ENCODE measurements at regions of chr5 and their contacts with region 1.

Region 1: GRCh38 chr5:137220523-137220927 is 278.6 kb downstream of the SPOCK1 start:
- DNase-seq: peak; percentile 35 to 75 (median 66)
- H3K4me3 ChIP-seq: no peak overlapping the region
- H3K27ac ChIP-seq: peak overlapping the region in 1 of 5 donors; percentile 1
- H3K4me1 ChIP-seq: peaks cover 0 to 7% of the 10 kb centered on the region in 2 donors
- H3K27me3 ChIP-seq: no peaks in the 10 kb centered on the region
- CTCF ChIP-seq: peak; percentile 24 to 79 (median 74)
- POLR2A ChIP-seq: no peak

Region 2: GRCh38 chr5:136811551-136811950 is 409.0 kb before region 1 on chr5:
- intact Hi-C with region 1: loop called in 1 of 2 experiments (anchors 10 kb)
- DNase-seq: peak in 6 of 7 donors; percentile 30 to 65 (median 46)
- H3K4me3 ChIP-seq: no peak overlapping the region
- H3K27ac ChIP-seq: peak overlapping the region in 2 of 5 donors; percentile 75 to 80
- H3K4me1 ChIP-seq: peaks cover 24 to 31% of the 10 kb centered on the region in 2 donors
- H3K27me3 ChIP-seq: no peaks in the 10 kb centered on the region
- CTCF ChIP-seq: no peak
- POLR2A ChIP-seq: no peak

Region 3: DNA sequence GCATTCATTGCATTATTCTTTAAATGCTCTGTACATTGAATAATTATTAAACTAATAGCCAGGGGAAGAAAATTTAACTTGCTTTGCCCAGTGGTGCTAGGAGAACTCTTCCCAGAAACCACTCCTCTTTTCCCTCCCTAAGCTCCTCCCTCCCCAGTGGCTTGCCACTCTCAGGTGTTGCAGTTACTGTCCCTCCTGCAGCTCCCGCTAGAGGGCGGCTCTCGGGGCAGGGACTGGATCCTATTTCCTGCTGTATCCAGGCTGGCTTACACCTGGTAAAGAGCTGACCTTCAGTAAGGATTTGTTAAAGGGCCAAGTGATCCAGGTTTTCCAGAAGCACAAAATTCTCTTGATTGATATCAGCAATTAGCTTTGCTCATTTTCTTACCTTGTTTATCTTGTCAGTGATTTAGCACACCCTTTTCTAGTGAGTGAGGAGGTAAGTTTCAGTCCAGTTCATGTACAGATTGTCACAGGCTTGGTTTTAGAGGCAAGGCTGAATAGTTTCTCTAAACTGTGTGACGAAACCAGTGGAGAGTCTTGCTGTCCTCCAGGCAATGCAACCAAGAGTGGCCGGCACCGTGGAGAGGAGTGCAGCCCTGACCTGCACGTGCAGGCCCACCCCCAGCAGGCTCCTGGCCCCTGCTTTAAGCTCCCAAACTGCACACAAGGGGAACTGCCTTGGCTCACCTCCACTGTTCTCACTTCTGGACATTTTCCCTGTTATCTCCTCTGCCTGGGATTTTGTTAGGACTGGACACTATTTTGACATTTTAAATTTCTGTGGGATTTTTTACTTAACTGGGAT is 145.2 kb before region 1 on chr5:
- intact Hi-C with region 1: loop called in 1 of 2 experiments (anchors 10 kb)
- DNase-seq: peak; percentile 79 to 94 (median 91)
- H3K4me3 ChIP-seq: no peak overlapping the region
- H3K27ac ChIP-seq: peak overlapping the region in 4 of 5 donors; percentile 13 to 77 (median 45)
- H3K4me1 ChIP-seq: peaks cover 15 to 43% of the 10 kb centered on the region in 2 donors
- H3K27me3 ChIP-seq: no peaks in the 10 kb centered on the region
- CTCF ChIP-seq: peak; percentile 60 to 83 (median 73)
- POLR2A ChIP-seq: no peak